ENCODE measurements at regions of chr9 and their contacts with region 1.

Region 1: GRCh38 chr9:14353222-14354056 is 39.5 kb upstream of the NFIB start:
- DNase-seq: peak; percentile 80 to 99 (median 93)
- ATAC-seq: peak; percentile 83 to 89 (median 89)
- H3K4me3 ChIP-seq: peak overlapping the region in 1 of 4 donors; percentile 6
- H3K27ac ChIP-seq: no peak overlapping the region
- H3K4me1 ChIP-seq: no peaks in the 10 kb centered on the region
- H3K27me3 ChIP-seq: peaks cover 0 to 12% (median 0%) of the 10 kb centered on the region in 4 donors
- CTCF ChIP-seq: peak; percentile 76 to 86 (median 85)

Region 2: GRCh38 chr9:13427587-13427986 is 925.9 kb before region 1 on chr9:
- intact Hi-C with region 1: loop called in 1 of 3 experiments (anchors 5 kb)
- DNase-seq: no peak
- ATAC-seq: peak in 3 of 4 donors; percentile 59 to 69 (median 65)
- H3K4me3 ChIP-seq: no peak overlapping the region
- H3K27ac ChIP-seq: no peak overlapping the region
- H3K4me1 ChIP-seq: no peaks in the 10 kb centered on the region
- H3K27me3 ChIP-seq: peaks cover 0 to 7% (median 3%) of the 10 kb centered on the region in 4 donors
- CTCF ChIP-seq: peak; percentile 43 to 70 (median 56)

Region 3: DNA sequence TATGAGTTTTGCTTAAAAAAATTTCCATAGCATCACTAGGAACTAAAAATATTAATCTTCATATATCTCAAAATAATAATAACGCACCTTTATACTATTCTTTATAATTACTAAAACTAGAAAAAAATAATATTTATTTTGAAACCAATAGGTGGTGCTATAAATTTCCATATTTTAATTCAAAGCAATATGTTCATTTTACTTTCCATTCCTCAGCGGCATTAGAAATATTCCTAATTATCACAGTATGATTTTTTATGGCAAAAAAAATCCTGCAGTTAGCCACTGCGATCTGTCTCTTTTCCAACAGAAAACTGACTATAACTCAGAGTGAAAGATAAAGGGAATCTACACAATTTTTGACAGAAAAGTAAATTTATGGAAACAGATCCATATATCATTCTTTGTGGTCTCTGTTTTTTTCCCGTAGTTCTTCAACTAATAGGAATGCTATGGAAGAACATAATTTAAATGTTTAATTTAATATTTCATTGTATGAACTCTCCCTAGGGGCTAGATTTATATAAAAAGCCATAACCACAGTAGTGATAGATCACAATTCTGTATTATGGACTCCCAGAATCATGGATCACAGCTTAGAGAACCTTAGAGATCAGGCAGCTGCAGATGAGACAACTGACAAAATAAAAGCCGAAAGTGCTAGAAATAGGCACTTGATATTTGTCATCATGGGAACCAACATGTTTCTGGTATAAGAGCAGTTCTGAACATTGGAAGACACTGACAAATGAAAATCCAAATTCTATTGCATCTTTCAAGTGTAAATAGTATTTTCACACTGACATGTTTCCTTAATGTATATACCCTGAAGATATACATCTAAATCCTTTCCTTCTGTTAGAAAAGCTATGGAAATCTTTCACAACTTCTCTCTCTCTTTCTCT is 906.2 kb before region 1 on chr9:
- intact Hi-C with region 1: loop called in 1 of 3 experiments (anchors 5 kb)
- DNase-seq: no peak
- ATAC-seq: no peak
- H3K4me3 ChIP-seq: no peak overlapping the region
- H3K27ac ChIP-seq: no peak overlapping the region
- H3K4me1 ChIP-seq: no peaks in the 10 kb centered on the region
- H3K27me3 ChIP-seq: peaks cover 0 to 6% (median 0%) of the 10 kb centered on the region in 4 donors
- CTCF ChIP-seq: no peak

Region 4: DNA sequence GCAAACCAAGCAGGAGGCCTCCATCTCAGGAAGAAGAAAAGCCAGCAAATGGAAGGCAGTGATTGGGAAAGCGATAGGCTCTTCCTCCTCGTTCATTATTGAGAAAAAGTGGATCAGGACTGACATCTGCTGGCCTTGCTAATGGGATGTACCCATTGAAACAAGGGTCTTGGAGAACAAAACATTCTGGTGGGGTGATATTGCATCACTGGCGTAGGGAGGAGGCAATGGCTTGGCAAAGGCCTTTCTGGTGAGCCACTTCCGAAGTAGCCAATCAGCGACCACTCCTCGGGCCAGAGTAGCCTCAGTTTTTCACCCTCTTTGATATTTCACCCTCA is 47.2 kb after region 1 on chr9:
- intact Hi-C with region 1: no loop called
- DNase-seq: peak in 1 of 6 donors; percentile 16
- ATAC-seq: peak in 3 of 4 donors; percentile 67 to 77 (median 69)
- H3K4me3 ChIP-seq: no peak overlapping the region
- H3K27ac ChIP-seq: no peak overlapping the region
- H3K4me1 ChIP-seq: peaks cover 0 to 3% (median 0%) of the 10 kb centered on the region in 3 donors
- H3K27me3 ChIP-seq: no peaks in the 10 kb centered on the region
- CTCF ChIP-seq: no peak

Region 5: GRCh38 chr9:15813076-15813475 is 1459.6 kb after region 1 on chr9:
- intact Hi-C with region 1: no loop called
- DNase-seq: no peak
- ATAC-seq: no peak
- H3K4me3 ChIP-seq: no peak overlapping the region
- H3K27ac ChIP-seq: no peak overlapping the region
- H3K4me1 ChIP-seq: no peaks in the 10 kb centered on the region
- H3K27me3 ChIP-seq: no peaks in the 10 kb centered on the region
- CTCF ChIP-seq: no peak